Panc1 (cell line): ENCODE measurements at regions of chr6 and their contacts with region 1.

Region 1: GRCh38 chr6:151191527-151191926 is 48.2 kb upstream of the AKAP12 start:
- DNase-seq: no peak
- ATAC-seq: no peak
- H3K4me3 ChIP-seq: no peak overlapping the region
- H3K27ac ChIP-seq: no peak overlapping the region
- H3K4me1 ChIP-seq: no peaks in the 10 kb centered on the region
- H3K27me3 ChIP-seq: no peaks in the 10 kb centered on the region
- CTCF ChIP-seq: no peak

Region 2: GRCh38 chr6:150491131-150491810 is 700.3 kb before region 1 on chr6:
- CTCF ChIA-PET with region 1: no interaction called
- POLR2A ChIA-PET with region 1: no interaction called
- in situ Hi-C with region 1: no loop called
- intact Hi-C with region 1: no loop called
- DNase-seq: no peak
- ATAC-seq: no peak
- H3K4me3 ChIP-seq: no peak overlapping the region
- H3K27ac ChIP-seq: no peak overlapping the region
- H3K4me1 ChIP-seq: no peaks in the 10 kb centered on the region
- H3K27me3 ChIP-seq: no peaks in the 10 kb centered on the region
- CTCF ChIP-seq: no peak

Region 3: GRCh38 chr6:151209071-151209831 is 17.7 kb after region 1 on chr6:
- CTCF ChIA-PET with region 1: interaction called, 12 read pairs
- POLR2A ChIA-PET with region 1: no interaction called
- in situ Hi-C with region 1: no loop called
- intact Hi-C with region 1: no loop called
- DNase-seq: no peak
- ATAC-seq: peak; percentile 91
- H3K4me3 ChIP-seq: peak overlapping the region; percentile 11 to 41
- H3K27ac ChIP-seq: peak overlapping the region; percentile 50
- H3K4me1 ChIP-seq: peaks cover 9% of the 10 kb centered on the region; the same call in 1 of the 2 replicates
- H3K27me3 ChIP-seq: no peaks in the 10 kb centered on the region
- CTCF ChIP-seq: no peak

Region 4: DNA sequence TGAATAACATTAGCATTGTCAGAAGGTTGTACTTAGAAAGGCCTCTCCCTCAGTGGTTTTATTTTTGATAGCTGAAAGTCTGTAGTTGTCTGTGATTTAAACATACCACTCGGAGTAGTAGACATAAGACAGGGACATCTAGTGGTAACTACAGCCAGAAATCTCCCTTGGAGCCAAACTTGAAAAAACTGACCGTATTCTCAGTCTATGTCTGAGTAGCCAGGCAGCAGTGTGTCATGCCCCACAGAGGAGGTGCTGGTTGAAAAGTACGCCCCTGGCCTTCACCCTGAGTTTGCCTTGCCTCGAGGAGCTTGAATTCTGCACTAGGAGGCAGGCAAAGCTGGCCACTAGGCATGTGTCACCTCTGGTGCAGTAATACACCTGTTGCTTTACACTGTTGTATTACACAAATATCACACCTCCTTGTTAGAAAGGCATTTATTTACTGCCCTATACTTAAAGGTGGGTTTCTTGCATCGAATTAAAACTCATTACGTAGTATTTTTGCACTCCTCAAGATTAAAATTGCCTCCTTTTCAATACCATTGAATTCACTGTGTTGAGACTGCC is 179.1 kb after region 1 on chr6:
- CTCF ChIA-PET with region 1: no interaction called
- POLR2A ChIA-PET with region 1: no interaction called
- in situ Hi-C with region 1: no loop called
- intact Hi-C with region 1: no loop called
- DNase-seq: no peak
- ATAC-seq: 0 out of 2 replicates have a peak, but pooled peaks have one; percentile 54
- H3K4me3 ChIP-seq: no peak overlapping the region
- H3K27ac ChIP-seq: no peak overlapping the region
- H3K4me1 ChIP-seq: peaks cover 10% of the 10 kb centered on the region
- H3K27me3 ChIP-seq: no peaks in the 10 kb centered on the region
- CTCF ChIP-seq: peak; percentile 62

Region 5: GRCh38 chr6:151681433-151682059 is 490.0 kb after region 1 on chr6:
- CTCF ChIA-PET with region 1: no interaction called
- POLR2A ChIA-PET with region 1: no interaction called
- in situ Hi-C with region 1: no loop called
- intact Hi-C with region 1: no loop called
- DNase-seq: no peak
- ATAC-seq: no peak
- H3K4me3 ChIP-seq: no peak overlapping the region
- H3K27ac ChIP-seq: no peak overlapping the region
- H3K4me1 ChIP-seq: no peaks in the 10 kb centered on the region
- H3K27me3 ChIP-seq: no peaks in the 10 kb centered on the region
- CTCF ChIP-seq: no peak